ENCODE measurements at regions of chr1 and their contacts with region 1.

Region 1: DNA sequence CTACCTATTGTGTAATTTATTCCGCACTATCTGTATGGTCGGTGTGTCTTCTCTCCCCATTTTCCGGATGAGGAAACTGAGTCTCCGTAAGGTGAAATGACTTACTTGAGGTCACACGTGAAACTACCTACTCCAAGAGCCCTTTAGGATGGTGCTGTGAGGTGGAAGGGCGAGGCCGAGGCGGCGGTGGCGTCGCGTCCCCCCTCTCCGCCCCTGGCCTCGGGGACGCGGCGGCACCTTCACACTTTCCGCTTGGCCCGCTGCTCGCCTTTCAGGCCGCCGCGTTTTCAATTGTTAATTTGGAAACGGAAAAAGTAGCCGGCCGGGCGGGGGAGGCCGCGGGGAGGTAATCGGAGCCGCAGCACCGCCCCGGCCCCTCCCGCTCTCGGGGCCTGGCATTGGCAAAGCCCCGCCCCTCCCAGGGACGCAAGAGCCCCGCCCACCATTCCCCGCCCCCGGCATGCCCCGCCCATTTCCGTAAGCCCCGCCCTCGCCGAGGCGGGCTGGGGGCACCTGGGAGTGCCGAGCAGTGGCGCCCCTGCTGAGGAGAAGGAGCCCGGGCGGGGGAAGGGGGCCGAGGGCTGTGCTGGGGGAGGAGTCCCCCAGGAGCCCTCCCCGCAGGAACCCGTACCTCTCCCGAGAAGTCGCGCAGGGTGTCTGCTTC is 18.6 kb downstream of the KCNQ4 start:
- DNase-seq: peak; percentile 88
- H3K4me3 Mint-ChIP-seq: peak overlapping the region; percentile 38
- H3K27ac Mint-ChIP-seq: no peak overlapping the region
- H3K4me1 Mint-ChIP-seq: peaks cover 25% of the 10 kb centered on the region
- H3K27me3 Mint-ChIP-seq: no peaks in the 10 kb centered on the region

Region 2: GRCh38 chr1:40818264-40818961 is 16.2 kb after region 1 on chr1:
- CTCF ChIA-PET with region 1: no interaction called
- intact Hi-C with region 1: loop called (anchors 2 kb)
- DNase-seq: peak; percentile 91
- H3K4me3 Mint-ChIP-seq: peak overlapping the region; percentile 75
- H3K27ac Mint-ChIP-seq: no peak overlapping the region
- H3K4me1 Mint-ChIP-seq: peaks cover 12% of the 10 kb centered on the region
- H3K27me3 Mint-ChIP-seq: no peaks in the 10 kb centered on the region

Measured in activated naive CD4-positive, alpha-beta T cell treated with anti-CD3 and anti-CD28 coated beads for 36 hours (primary cell).